Activated B cell treated with CpG ODN at 0.5 μM for 24 hours (primary cell): ENCODE measurements at regions of chr11 and their contacts with region 1.

Region 1: GRCh38 chr11:63478896-63479295 is 12.1 kb downstream of the PLAAT5 start:
- DNase-seq: no peak
- ATAC-seq: peak; percentile 31
- H3K4me3 Mint-ChIP-seq: no peak overlapping the region
- H3K27ac Mint-ChIP-seq: no peak overlapping the region
- H3K4me1 Mint-ChIP-seq: no peaks in the 10 kb centered on the region
- H3K27me3 Mint-ChIP-seq: peaks cover 33% of the 10 kb centered on the region
- CTCF ChIP-seq: peak; percentile 32

Region 2: GRCh38 chr11:63635762-63636465 is 157.0 kb after region 1 on chr11:
- CTCF ChIA-PET with region 1: interaction called, 148 read pairs
- POLR2A ChIA-PET with region 1: interaction called, 4 read pairs
- intact Hi-C with region 1: loop called (anchors 1 kb)
- DNase-seq: peak; percentile 23
- ATAC-seq: peak; percentile 72
- H3K4me3 Mint-ChIP-seq: no peak overlapping the region
- H3K27ac Mint-ChIP-seq: no peak overlapping the region
- H3K4me1 Mint-ChIP-seq: peaks cover 9% of the 10 kb centered on the region
- H3K27me3 Mint-ChIP-seq: no peaks in the 10 kb centered on the region
- CTCF ChIP-seq: no peak

Region 3: GRCh38 chr11:63738720-63739360 is 259.9 kb after region 1 on chr11:
- CTCF ChIA-PET with region 1: interaction called, 48 read pairs
- POLR2A ChIA-PET with region 1: no interaction called
- intact Hi-C with region 1: loop called (anchors 1 kb)
- DNase-seq: peak; percentile 37
- ATAC-seq: no peak
- H3K4me3 Mint-ChIP-seq: no peak overlapping the region
- H3K27ac Mint-ChIP-seq: no peak overlapping the region
- H3K4me1 Mint-ChIP-seq: peaks cover 2% of the 10 kb centered on the region
- H3K27me3 Mint-ChIP-seq: no peaks in the 10 kb centered on the region
- CTCF ChIP-seq: peak; percentile 100

Region 4: DNA sequence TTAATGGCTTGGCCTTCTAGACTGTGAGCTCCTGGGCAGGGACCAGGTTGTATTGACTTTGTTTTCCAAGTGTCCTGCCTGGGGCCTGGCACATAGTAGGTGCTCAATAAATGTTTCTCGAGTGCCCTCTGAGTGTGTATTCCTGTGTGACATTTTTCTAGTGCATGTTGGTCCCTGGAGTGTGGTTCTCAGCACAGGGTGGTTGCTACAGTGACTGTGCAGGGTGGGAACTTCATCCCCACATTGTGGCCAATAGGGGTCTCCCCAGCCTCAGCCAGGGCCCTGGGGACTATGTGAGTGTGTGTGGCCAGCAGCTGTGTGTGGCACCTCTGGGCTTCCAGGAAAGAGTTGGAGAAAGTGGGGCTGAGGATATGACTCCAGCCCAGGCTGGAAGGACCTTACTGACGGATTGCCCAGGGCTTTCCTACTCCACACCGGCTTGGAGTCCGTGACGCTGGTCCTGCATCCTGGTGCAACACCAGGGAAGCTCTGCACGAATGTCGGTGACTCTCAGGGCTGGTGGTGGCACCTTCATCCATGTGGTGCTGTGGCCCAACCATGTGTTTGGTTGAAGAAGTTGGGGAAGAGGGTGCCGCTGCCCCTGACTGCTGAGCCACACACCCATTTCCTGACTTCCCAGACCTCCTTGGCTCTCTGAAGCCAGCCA is 351.1 kb after region 1 on chr11:
- CTCF ChIA-PET with region 1: no interaction called
- POLR2A ChIA-PET with region 1: no interaction called
- intact Hi-C with region 1: no loop called
- DNase-seq: no peak
- ATAC-seq: no peak
- H3K4me3 Mint-ChIP-seq: no peak overlapping the region
- H3K27ac Mint-ChIP-seq: no peak overlapping the region
- H3K4me1 Mint-ChIP-seq: peaks cover 2% of the 10 kb centered on the region
- H3K27me3 Mint-ChIP-seq: no peaks in the 10 kb centered on the region
- CTCF ChIP-seq: no peak

Region 5: GRCh38 chr11:63945477-63946163 is 466.7 kb after region 1 on chr11:
- CTCF ChIA-PET with region 1: interaction called, 4 read pairs
- POLR2A ChIA-PET with region 1: no interaction called
- intact Hi-C with region 1: loop called (anchors 10 kb)
- DNase-seq: no peak
- ATAC-seq: peak; percentile 79
- H3K4me3 Mint-ChIP-seq: no peak overlapping the region
- H3K27ac Mint-ChIP-seq: no peak overlapping the region
- H3K4me1 Mint-ChIP-seq: peaks cover 23% of the 10 kb centered on the region
- H3K27me3 Mint-ChIP-seq: no peaks in the 10 kb centered on the region
- CTCF ChIP-seq: no peak